BJ (cell line): ENCODE measurements at regions of chr19 and their contacts with region 1.

Region 1: DNA sequence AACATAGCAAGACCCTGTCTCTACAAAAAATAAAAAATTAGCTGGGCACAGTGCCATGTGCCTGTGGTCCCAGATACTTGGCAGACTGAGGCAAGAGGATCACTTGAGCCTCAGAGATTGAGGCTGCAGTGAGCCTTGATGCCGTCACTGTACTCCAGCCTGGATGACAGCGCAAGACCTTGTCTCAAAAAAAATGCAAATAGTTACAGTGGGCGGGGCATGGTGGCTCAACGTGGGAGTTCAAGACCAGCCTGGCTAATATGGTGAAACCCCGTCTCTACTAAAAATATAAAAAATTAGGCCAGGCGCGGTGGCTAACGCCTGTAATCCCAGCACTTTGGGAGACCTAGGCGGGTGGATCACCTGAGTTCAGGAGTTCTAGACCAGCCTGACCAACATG is 8.5 kb downstream of the PGLS start:
- DNase-seq: no peak
- H3K4me3 ChIP-seq: no peak overlapping the region
- H3K27me3 ChIP-seq: no peaks in the 10 kb centered on the region
- CTCF ChIP-seq: no peak

Region 2: GRCh38 chr19:17530586-17530985 is 10.6 kb after region 1 on chr19:
- CTCF ChIA-PET with region 1: interaction called, 12 read pairs
- POLR2A ChIA-PET with region 1: no interaction called
- DNase-seq: no peak
- H3K4me3 ChIP-seq: no peak overlapping the region
- H3K27me3 ChIP-seq: 0 out of 2 replicates have a peak, but pooled peaks cover 2% of the 10 kb centered on the region
- CTCF ChIP-seq: no peak